ENCODE measurements at regions of chr11 and their contacts with region 1.

Region 1: DNA sequence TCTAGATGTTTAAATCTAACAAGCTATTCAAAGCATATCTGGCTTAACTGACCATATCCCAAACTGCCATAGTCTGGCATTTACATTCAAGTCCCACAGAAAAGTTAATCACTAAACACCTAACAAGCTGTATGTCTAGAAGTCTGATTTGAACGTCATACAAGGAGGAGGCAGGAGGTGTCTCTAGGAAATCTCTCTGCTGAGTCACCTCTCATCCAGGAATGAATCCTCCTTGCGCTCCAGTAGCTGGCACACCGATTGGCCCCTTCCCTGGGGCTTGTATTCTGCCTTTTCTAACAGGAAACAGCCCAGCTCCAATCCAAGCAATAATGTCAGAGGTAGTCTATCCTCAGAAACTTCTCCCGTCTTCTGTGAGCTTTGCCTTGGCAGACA is 31.8 kb downstream of the FEZ1 start:
- DNase-seq: no peak
- H3K4me3 ChIP-seq: no peak overlapping the region
- H3K27ac ChIP-seq: no peak overlapping the region
- H3K4me1 ChIP-seq: peaks cover 0 to 8% (median 2%) of the 10 kb centered on the region in 4 experiments; a peak in 5 of 7 replicates
- H3K27me3 ChIP-seq: no peaks in the 10 kb centered on the region
- CTCF ChIP-seq: no peak
- EP300 ChIP-seq: no peak
- POLR2A ChIP-seq: no peak
- RAD21 ChIP-seq: no peak

Region 2: GRCh38 chr11:125451400-125452124 is 12.7 kb before region 1 on chr11:
- CTCF ChIA-PET with region 1: interaction called, 16 read pairs
- POLR2A ChIA-PET with region 1: interaction called, 4 read pairs
- DNase-seq: peak in 1 of 2 experiments; percentile 90
- H3K4me3 ChIP-seq: no peak overlapping the region
- H3K27ac ChIP-seq: no peak overlapping the region
- H3K4me1 ChIP-seq: peaks cover 7 to 13% (median 10%) of the 10 kb centered on the region in 4 experiments; a peak in 6 of 7 replicates
- H3K27me3 ChIP-seq: no peaks in the 10 kb centered on the region
- CTCF ChIP-seq: no peak
- EP300 ChIP-seq: no peak
- POLR2A ChIP-seq: no peak
- RAD21 ChIP-seq: no peak

Measured in H1 (cell line).